ENCODE measurements at regions of chr15 and their contacts with region 1.

Region 1: GRCh38 chr15:100349696-100350433 is 8.1 kb upstream of the ADAMTS17 start:
- DNase-seq: peak; percentile 98
- H3K4me3 Mint-ChIP-seq: peak overlapping the region; percentile 94
- H3K27ac Mint-ChIP-seq: peak overlapping the region; percentile 89
- H3K4me1 Mint-ChIP-seq: peaks cover 22% of the 10 kb centered on the region
- H3K27me3 Mint-ChIP-seq: peaks cover 22% of the 10 kb centered on the region
- CTCF ChIP-seq: peak; percentile 70

Region 2: GRCh38 chr15:99275525-99276128 is 1074.2 kb before region 1 on chr15:
- CTCF ChIA-PET with region 1: no interaction called
- intact Hi-C with region 1: loop called (anchors 10 kb)
- DNase-seq: no peak
- H3K4me3 Mint-ChIP-seq: no peak overlapping the region
- H3K27ac Mint-ChIP-seq: no peak overlapping the region
- H3K4me1 Mint-ChIP-seq: no peaks in the 10 kb centered on the region
- H3K27me3 Mint-ChIP-seq: no peaks in the 10 kb centered on the region
- CTCF ChIP-seq: no peak

Region 3: GRCh38 chr15:100383302-100384107 is 33.6 kb after region 1 on chr15:
- CTCF ChIA-PET with region 1: interaction called, 42 read pairs
- intact Hi-C with region 1: loop called (anchors 1 kb)
- DNase-seq: peak; percentile 66
- H3K4me3 Mint-ChIP-seq: no peak overlapping the region
- H3K27ac Mint-ChIP-seq: no peak overlapping the region
- H3K4me1 Mint-ChIP-seq: no peaks in the 10 kb centered on the region
- H3K27me3 Mint-ChIP-seq: peaks cover 30% of the 10 kb centered on the region
- CTCF ChIP-seq: peak; percentile 24

Region 4: DNA sequence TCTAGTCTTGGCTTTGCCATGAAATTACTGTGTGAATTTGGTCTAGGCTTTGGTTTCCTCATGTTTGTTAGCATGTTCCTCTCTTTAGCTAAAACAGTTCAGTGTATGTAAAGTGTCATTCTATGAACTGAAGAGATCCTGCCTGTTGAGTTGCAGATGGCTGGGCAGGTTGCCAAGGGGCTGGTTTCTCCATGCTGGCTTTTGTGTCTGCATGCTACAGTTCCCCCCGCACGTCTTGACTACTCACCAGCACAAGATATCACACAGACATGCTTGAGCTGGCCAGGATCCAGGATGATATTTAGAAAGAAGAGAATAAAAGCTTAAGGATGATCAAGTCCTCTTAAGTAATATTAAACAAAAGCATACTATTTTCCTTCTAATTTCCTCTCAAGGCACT is 88.7 kb after region 1 on chr15:
- CTCF ChIA-PET with region 1: no interaction called
- intact Hi-C with region 1: no loop called
- DNase-seq: peak; percentile 32
- H3K4me3 Mint-ChIP-seq: no peak overlapping the region
- H3K27ac Mint-ChIP-seq: no peak overlapping the region
- H3K4me1 Mint-ChIP-seq: no peaks in the 10 kb centered on the region
- H3K27me3 Mint-ChIP-seq: peaks cover 41% of the 10 kb centered on the region
- CTCF ChIP-seq: no peak

Region 5: GRCh38 chr15:100572362-100572983 is 222.6 kb after region 1 on chr15:
- CTCF ChIA-PET with region 1: interaction called, 25 read pairs
- intact Hi-C with region 1: loop called (anchors 1 kb)
- DNase-seq: no peak
- H3K4me3 Mint-ChIP-seq: no peak overlapping the region
- H3K27ac Mint-ChIP-seq: no peak overlapping the region
- H3K4me1 Mint-ChIP-seq: no peaks in the 10 kb centered on the region
- H3K27me3 Mint-ChIP-seq: no peaks in the 10 kb centered on the region
- CTCF ChIP-seq: peak; percentile 21

Measured in Calu3 (cell line).